Caco-2 (cell line): ENCODE measurements at regions of chr16 and their contacts with region 1.

Region 1: GRCh38 chr16:53022374-53022773 is 30.3 kb downstream of the CHD9NB start:
- DNase-seq: peak; percentile 59 to 73
- H3K4me3 ChIP-seq: no peak overlapping the region
- H3K4me3 Mint-ChIP-seq: no peak overlapping the region
- H3K27ac Mint-ChIP-seq: no peak overlapping the region
- H3K4me1 ChIP-seq: no peaks in the 10 kb centered on the region
- H3K4me1 Mint-ChIP-seq: no peaks in the 10 kb centered on the region
- H3K27me3 ChIP-seq: peaks cover 2% of the 10 kb centered on the region; the same call in 1 of the 2 replicates
- H3K27me3 Mint-ChIP-seq: peaks cover 6% of the 10 kb centered on the region
- CTCF ChIP-seq: peak; percentile 75 to 76

Region 2: DNA sequence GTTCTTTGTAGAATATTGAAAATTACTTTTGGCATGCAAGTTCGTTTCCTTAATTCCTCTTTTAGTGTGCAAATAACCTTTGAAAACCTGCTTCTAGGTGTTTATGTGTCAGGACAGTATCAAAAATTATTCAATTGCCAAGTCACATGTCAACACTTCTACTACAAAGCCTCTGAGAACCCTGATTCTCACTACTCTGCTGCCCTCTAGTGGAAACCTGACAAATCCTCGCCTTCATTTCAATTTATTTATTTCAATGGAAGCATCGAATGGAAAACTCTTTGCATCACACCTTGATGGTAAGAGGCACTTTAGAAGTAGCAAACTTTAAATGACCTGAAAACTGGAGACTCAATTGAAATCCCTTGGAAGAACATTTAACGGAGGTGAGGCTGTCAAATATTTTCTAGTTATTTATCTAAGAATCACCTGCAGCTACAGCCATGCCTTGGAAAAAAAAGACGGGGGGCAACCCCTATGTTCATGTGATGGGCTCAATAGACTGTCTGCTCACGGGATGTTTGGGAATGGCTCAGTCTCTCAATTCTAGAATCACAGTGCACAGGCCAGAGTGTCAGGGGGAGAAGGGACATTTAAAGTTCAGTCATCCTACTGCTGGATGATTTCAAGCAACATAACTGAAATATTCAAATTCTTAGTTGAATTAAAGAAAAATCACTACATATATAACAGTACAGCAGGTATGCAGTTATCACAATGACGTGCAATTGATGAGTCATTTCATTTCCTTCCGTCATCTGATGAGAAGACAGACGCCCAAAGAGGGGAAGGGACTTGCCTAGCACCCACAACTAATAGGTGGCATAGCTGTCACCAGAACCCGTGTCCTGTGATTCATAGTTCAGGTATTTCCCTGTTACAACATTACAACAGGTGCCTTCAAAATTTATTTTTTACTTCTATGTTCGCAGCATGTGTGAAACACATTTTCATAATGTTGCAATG is 1039.4 kb before region 1 on chr16:
- CTCF ChIA-PET with region 1: no interaction called
- POLR2A ChIA-PET with region 1: no interaction called
- intact Hi-C with region 1: loop called (anchors 5 kb)
- DNase-seq: peak; percentile 38 to 76
- H3K4me3 ChIP-seq: no peak overlapping the region
- H3K4me3 Mint-ChIP-seq: no peak overlapping the region
- H3K27ac Mint-ChIP-seq: no peak overlapping the region
- H3K4me1 ChIP-seq: no peaks in the 10 kb centered on the region
- H3K4me1 Mint-ChIP-seq: no peaks in the 10 kb centered on the region
- H3K27me3 ChIP-seq: no peaks in the 10 kb centered on the region; the same call in 1 of the 2 replicates
- H3K27me3 Mint-ChIP-seq: peaks cover 5% of the 10 kb centered on the region
- CTCF ChIP-seq: peak; percentile 71 to 82

Region 3: GRCh38 chr16:52068447-52069074 is 953.8 kb before region 1 on chr16:
- CTCF ChIA-PET with region 1: interaction called, 9 read pairs
- POLR2A ChIA-PET with region 1: no interaction called
- intact Hi-C with region 1: loop called (anchors 1 kb)
- DNase-seq: peak; percentile 44 to 46
- H3K4me3 ChIP-seq: no peak overlapping the region
- H3K4me3 Mint-ChIP-seq: no peak overlapping the region
- H3K27ac Mint-ChIP-seq: no peak overlapping the region
- H3K4me1 ChIP-seq: no peaks in the 10 kb centered on the region
- H3K4me1 Mint-ChIP-seq: no peaks in the 10 kb centered on the region
- H3K27me3 ChIP-seq: no peaks in the 10 kb centered on the region
- H3K27me3 Mint-ChIP-seq: peaks cover 5% of the 10 kb centered on the region
- CTCF ChIP-seq: peak in 1 of 2 experiments; percentile 49

Region 4: GRCh38 chr16:52581530-52581929 is 440.8 kb before region 1 on chr16:
- CTCF ChIA-PET with region 1: no interaction called
- POLR2A ChIA-PET with region 1: no interaction called
- intact Hi-C with region 1: loop called (anchors 1 kb)
- DNase-seq: peak in 1 of 2 experiments; percentile 41
- H3K4me3 ChIP-seq: no peak overlapping the region
- H3K4me3 Mint-ChIP-seq: no peak overlapping the region
- H3K27ac Mint-ChIP-seq: no peak overlapping the region
- H3K4me1 ChIP-seq: peaks cover 10% of the 10 kb centered on the region
- H3K4me1 Mint-ChIP-seq: peaks cover 13% of the 10 kb centered on the region
- H3K27me3 ChIP-seq: no peaks in the 10 kb centered on the region
- H3K27me3 Mint-ChIP-seq: no peaks in the 10 kb centered on the region
- CTCF ChIP-seq: peak; percentile 57 to 80

Region 5: DNA sequence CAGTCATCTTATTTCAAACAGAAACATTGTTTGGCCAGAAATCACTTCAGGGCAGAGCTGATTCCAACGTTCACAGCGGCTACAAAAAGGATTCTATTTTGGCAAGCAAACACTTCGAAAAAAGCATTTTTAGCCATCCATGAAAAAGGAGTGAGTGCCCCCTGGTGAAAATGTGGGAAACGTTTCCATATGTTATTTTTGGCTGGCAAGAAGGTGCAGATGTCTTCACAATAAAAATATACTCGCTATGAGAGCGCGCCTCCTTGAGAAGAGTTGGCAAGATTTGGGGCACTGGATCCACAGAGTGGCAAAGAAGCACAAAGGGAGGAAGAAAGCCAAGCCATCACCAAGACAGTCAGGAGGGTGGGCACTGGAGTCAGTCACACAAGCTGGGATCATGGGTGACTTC is 160.8 kb before region 1 on chr16:
- CTCF ChIA-PET with region 1: interaction called, 3 read pairs
- POLR2A ChIA-PET with region 1: no interaction called
- intact Hi-C with region 1: loop called (anchors 1 kb)
- DNase-seq: peak in 1 of 2 experiments; percentile 40
- H3K4me3 ChIP-seq: no peak overlapping the region
- H3K4me3 Mint-ChIP-seq: no peak overlapping the region
- H3K27ac Mint-ChIP-seq: no peak overlapping the region
- H3K4me1 ChIP-seq: no peaks in the 10 kb centered on the region
- H3K4me1 Mint-ChIP-seq: no peaks in the 10 kb centered on the region
- H3K27me3 ChIP-seq: no peaks in the 10 kb centered on the region
- H3K27me3 Mint-ChIP-seq: peaks cover 13% of the 10 kb centered on the region
- CTCF ChIP-seq: peak; percentile 50 to 70

Region 6: GRCh38 chr16:52912565-52913173 is 109.7 kb before region 1 on chr16:
- CTCF ChIA-PET with region 1: interaction called, 3 read pairs
- POLR2A ChIA-PET with region 1: no interaction called
- intact Hi-C with region 1: loop called (anchors 1 kb)
- DNase-seq: peak; percentile 74 to 75
- H3K4me3 ChIP-seq: no peak overlapping the region
- H3K4me3 Mint-ChIP-seq: no peak overlapping the region
- H3K27ac Mint-ChIP-seq: no peak overlapping the region
- H3K4me1 ChIP-seq: no peaks in the 10 kb centered on the region
- H3K4me1 Mint-ChIP-seq: no peaks in the 10 kb centered on the region
- H3K27me3 ChIP-seq: no peaks in the 10 kb centered on the region
- H3K27me3 Mint-ChIP-seq: peaks cover 8% of the 10 kb centered on the region
- CTCF ChIP-seq: peak; percentile 80 to 94

Region 7: GRCh38 chr16:52976539-52977167 is 45.7 kb before region 1 on chr16:
- CTCF ChIA-PET with region 1: interaction called, 11 read pairs
- POLR2A ChIA-PET with region 1: no interaction called
- intact Hi-C with region 1: loop called (anchors 1 kb)
- DNase-seq: peak in 1 of 2 experiments; percentile 37
- H3K4me3 ChIP-seq: no peak overlapping the region
- H3K4me3 Mint-ChIP-seq: no peak overlapping the region
- H3K27ac Mint-ChIP-seq: no peak overlapping the region
- H3K4me1 ChIP-seq: no peaks in the 10 kb centered on the region
- H3K4me1 Mint-ChIP-seq: no peaks in the 10 kb centered on the region
- H3K27me3 ChIP-seq: no peaks in the 10 kb centered on the region; the same call in 1 of the 2 replicates
- H3K27me3 Mint-ChIP-seq: peaks cover 18% of the 10 kb centered on the region
- CTCF ChIP-seq: peak; percentile 22 to 50